ENCODE measurements at regions of chr7 and their contacts with region 1.

Region 1: GRCh38 chr7:31633894-31634494 is 53.0 kb upstream of the PPP1R17 start:
- DNase-seq: peak; percentile 73 to 77
- H3K4me3 ChIP-seq: no peak overlapping the region
- H3K4me3 Mint-ChIP-seq: no peak overlapping the region
- H3K27ac Mint-ChIP-seq: no peak overlapping the region
- H3K4me1 ChIP-seq: peaks cover 10% of the 10 kb centered on the region
- H3K4me1 Mint-ChIP-seq: peaks cover 6% of the 10 kb centered on the region
- H3K27me3 ChIP-seq: no peaks in the 10 kb centered on the region
- H3K27me3 Mint-ChIP-seq: no peaks in the 10 kb centered on the region
- CTCF ChIP-seq: peak; percentile 76 to 80

Region 2: GRCh38 chr7:30389791-30390190 is 1244.2 kb before region 1 on chr7:
- CTCF ChIA-PET with region 1: no interaction called
- POLR2A ChIA-PET with region 1: no interaction called
- intact Hi-C with region 1: no loop called
- DNase-seq: no peak
- H3K4me3 ChIP-seq: no peak overlapping the region
- H3K4me3 Mint-ChIP-seq: no peak overlapping the region
- H3K27ac Mint-ChIP-seq: no peak overlapping the region
- H3K4me1 ChIP-seq: no peaks in the 10 kb centered on the region
- H3K4me1 Mint-ChIP-seq: no peaks in the 10 kb centered on the region
- H3K27me3 ChIP-seq: no peaks in the 10 kb centered on the region
- H3K27me3 Mint-ChIP-seq: no peaks in the 10 kb centered on the region
- CTCF ChIP-seq: no peak

Region 3: DNA sequence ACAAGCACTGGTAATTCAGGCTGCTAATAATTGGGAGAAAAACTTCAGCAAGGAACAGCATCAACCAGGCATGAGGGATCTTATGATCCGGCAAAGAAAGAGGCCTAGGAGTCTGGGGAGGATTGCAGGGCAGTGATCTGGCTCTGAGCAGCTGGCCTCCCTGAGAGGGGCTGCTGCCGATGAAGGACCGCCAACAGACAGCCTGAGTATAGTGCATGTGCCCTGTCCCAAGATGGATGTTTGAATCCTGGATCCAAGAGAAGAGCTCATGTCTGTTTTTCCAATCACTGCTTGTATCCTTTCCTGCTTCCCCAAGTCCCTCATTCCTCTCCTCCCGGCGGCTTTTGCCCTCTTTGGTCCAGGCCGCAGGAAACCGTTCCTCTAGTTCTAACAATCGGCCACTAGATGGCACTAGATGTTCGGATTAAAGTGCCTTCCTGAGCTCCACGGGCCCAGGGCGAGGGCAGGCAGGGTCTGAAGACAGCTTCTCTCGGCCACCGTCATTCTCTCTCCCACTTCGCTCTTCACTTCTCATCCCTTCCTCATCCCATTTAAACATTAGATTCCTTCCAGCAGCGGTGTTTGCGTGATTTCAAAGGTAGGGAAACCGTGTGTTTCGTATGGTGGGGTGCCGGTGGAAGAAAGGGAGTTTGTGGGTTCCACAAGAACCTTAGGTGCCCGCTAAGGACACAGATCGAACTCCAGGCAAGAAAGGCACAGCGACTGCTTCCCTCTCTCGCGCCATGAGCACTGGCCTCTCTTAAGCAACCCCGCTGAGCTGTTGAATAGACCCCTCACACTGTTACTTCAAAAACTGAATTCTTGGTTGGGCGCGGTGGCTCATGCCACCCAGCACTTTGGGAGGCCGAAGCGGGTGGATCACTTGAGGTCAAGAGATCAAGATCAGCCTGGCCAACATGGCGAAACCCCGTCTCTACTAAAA is 499.5 kb before region 1 on chr7:
- CTCF ChIA-PET with region 1: interaction called, 8 read pairs
- POLR2A ChIA-PET with region 1: no interaction called
- intact Hi-C with region 1: loop called (anchors 1 kb)
- DNase-seq: peak; percentile 75 to 78
- H3K4me3 ChIP-seq: no peak overlapping the region
- H3K4me3 Mint-ChIP-seq: no peak overlapping the region
- H3K27ac Mint-ChIP-seq: no peak overlapping the region
- H3K4me1 ChIP-seq: no peaks in the 10 kb centered on the region
- H3K4me1 Mint-ChIP-seq: no peaks in the 10 kb centered on the region
- H3K27me3 ChIP-seq: no peaks in the 10 kb centered on the region
- H3K27me3 Mint-ChIP-seq: peaks cover 3% of the 10 kb centered on the region
- CTCF ChIP-seq: peak; percentile 64 to 76

Region 4: DNA sequence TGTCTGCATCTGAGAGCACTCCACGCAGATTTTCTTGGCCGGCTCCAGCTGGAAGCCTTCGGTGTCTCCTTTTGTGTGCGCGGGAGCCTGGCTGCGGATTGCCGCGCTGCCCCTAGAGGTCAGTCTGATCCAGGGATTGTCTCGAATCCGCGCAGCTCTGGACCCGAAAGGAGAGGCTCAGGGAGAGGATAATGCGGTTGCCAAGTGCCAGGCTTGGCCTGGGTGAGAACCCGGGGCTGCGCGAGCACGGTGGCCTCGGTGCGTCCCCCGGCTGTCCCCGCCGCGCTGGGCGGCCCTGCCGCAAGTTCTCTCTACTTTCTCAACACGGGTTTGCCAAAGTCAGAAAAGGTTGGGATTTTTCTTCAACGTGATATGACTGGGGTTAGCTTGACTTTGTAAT is 441.0 kb before region 1 on chr7:
- CTCF ChIA-PET with region 1: interaction called, 9 read pairs
- POLR2A ChIA-PET with region 1: no interaction called
- intact Hi-C with region 1: loop called (anchors 1 kb)
- DNase-seq: peak; percentile 69
- H3K4me3 ChIP-seq: no peak overlapping the region
- H3K4me3 Mint-ChIP-seq: no peak overlapping the region
- H3K27ac Mint-ChIP-seq: no peak overlapping the region
- H3K4me1 ChIP-seq: no peaks in the 10 kb centered on the region
- H3K4me1 Mint-ChIP-seq: no peaks in the 10 kb centered on the region
- H3K27me3 ChIP-seq: no peaks in the 10 kb centered on the region
- H3K27me3 Mint-ChIP-seq: peaks cover 5% of the 10 kb centered on the region
- CTCF ChIP-seq: peak; percentile 72 to 87

Region 5: GRCh38 chr7:31373337-31374289 is 260.4 kb before region 1 on chr7:
- CTCF ChIA-PET with region 1: interaction called, 18 read pairs
- POLR2A ChIA-PET with region 1: no interaction called
- intact Hi-C with region 1: loop called (anchors 1 kb)
- DNase-seq: peak; percentile 72 to 80
- H3K4me3 ChIP-seq: no peak overlapping the region
- H3K4me3 Mint-ChIP-seq: no peak overlapping the region
- H3K27ac Mint-ChIP-seq: no peak overlapping the region
- H3K4me1 ChIP-seq: no peaks in the 10 kb centered on the region
- H3K4me1 Mint-ChIP-seq: no peaks in the 10 kb centered on the region
- H3K27me3 ChIP-seq: no peaks in the 10 kb centered on the region; the same call in 1 of the 2 replicates
- H3K27me3 Mint-ChIP-seq: no peaks in the 10 kb centered on the region
- CTCF ChIP-seq: peak; percentile 79 to 87

Region 6: DNA sequence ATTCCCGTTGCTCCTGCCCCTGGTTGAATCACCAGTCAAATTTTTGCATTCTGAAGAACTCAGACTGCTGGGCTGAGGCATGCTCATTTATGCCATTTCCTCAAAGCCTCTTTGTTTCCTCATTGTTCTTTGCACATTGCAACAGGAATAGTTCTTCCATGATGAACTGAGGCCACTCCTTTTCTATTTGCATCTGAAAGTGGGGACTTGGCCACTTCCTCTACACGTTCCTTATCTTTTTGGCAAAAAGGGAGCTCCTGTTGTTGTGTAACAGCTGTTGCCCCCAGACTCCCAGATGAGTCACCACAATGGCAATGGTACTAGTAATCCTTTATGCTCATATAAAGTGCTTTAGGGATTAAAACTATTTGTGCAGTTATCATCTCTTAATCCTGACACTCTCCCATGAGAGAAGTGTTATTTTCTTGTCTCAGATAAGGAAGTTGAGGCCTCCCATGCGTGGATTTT is 140.2 kb before region 1 on chr7:
- CTCF ChIA-PET with region 1: interaction called, 5 read pairs
- POLR2A ChIA-PET with region 1: no interaction called
- intact Hi-C with region 1: loop called (anchors 5 kb)
- DNase-seq: peak; percentile 66 to 71
- H3K4me3 ChIP-seq: no peak overlapping the region
- H3K4me3 Mint-ChIP-seq: no peak overlapping the region
- H3K27ac Mint-ChIP-seq: peak overlapping the region; percentile 68
- H3K4me1 ChIP-seq: peaks cover 35% of the 10 kb centered on the region
- H3K4me1 Mint-ChIP-seq: peaks cover 20% of the 10 kb centered on the region
- H3K27me3 ChIP-seq: no peaks in the 10 kb centered on the region
- H3K27me3 Mint-ChIP-seq: no peaks in the 10 kb centered on the region
- CTCF ChIP-seq: no peak

Region 7: DNA sequence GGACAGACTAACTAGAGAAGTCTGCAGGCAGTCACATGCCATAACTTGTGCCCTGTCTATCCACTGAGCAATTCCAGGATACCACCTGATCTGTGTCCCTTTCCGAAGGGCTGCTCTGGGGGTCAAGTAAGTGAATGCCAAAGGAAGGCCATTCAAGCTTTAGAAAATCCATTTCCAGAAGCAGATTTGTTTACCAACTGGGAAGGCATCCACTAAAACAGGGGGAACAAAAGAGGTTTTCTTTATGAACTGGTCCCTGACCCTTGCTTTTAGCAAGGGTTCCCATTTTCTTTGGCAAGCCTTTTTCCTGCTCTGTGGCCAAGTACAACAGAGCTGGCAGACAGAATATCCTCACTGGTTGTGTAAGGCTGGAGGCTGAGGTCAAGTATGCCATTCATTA is 83.6 kb before region 1 on chr7:
- CTCF ChIA-PET with region 1: no interaction called
- POLR2A ChIA-PET with region 1: no interaction called
- intact Hi-C with region 1: loop called (anchors 5 kb)
- DNase-seq: no peak
- H3K4me3 ChIP-seq: no peak overlapping the region
- H3K4me3 Mint-ChIP-seq: no peak overlapping the region
- H3K27ac Mint-ChIP-seq: no peak overlapping the region
- H3K4me1 ChIP-seq: peaks cover 46% of the 10 kb centered on the region
- H3K4me1 Mint-ChIP-seq: peaks cover 11% of the 10 kb centered on the region
- H3K27me3 ChIP-seq: no peaks in the 10 kb centered on the region
- H3K27me3 Mint-ChIP-seq: no peaks in the 10 kb centered on the region
- CTCF ChIP-seq: no peak

Region 8: DNA sequence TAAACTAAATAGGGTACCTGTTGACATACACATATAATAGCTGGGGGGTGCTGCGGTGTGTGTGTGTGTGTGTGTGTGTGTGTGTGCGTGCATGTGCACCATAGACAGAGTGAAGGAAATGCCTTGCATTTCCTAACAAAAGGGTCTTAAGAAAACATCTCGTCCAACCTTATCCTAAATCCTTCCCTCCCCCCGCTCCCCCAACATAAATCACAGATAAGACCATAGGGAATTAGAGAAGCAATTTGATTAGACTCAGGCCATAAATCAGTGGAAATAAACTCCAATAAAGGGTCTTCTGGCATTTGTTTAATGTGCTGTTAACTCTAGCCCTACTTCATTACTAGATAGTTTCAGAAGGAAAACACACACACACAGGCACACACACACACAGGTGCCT is 201.5 kb after region 1 on chr7:
- CTCF ChIA-PET with region 1: no interaction called
- POLR2A ChIA-PET with region 1: no interaction called
- intact Hi-C with region 1: no loop called
- DNase-seq: no peak
- H3K4me3 ChIP-seq: no peak overlapping the region
- H3K4me3 Mint-ChIP-seq: no peak overlapping the region
- H3K27ac Mint-ChIP-seq: no peak overlapping the region
- H3K4me1 ChIP-seq: peaks cover 2% of the 10 kb centered on the region; the same call in 1 of the 2 replicates
- H3K4me1 Mint-ChIP-seq: no peaks in the 10 kb centered on the region
- H3K27me3 ChIP-seq: no peaks in the 10 kb centered on the region
- H3K27me3 Mint-ChIP-seq: peaks cover 5% of the 10 kb centered on the region
- CTCF ChIP-seq: no peak

Measured in Caco-2 (cell line).